ENCODE measurements at regions of chr10 and their contacts with region 1.

Region 1: GRCh38 chr10:102208311-102209035 is 17.6 kb upstream of the ELOVL3 start:
- DNase-seq: no peak
- ATAC-seq: no peak
- H3K4me3 ChIP-seq: no peak overlapping the region
- H3K27ac ChIP-seq: no peak overlapping the region
- H3K4me1 ChIP-seq: no peaks in the 10 kb centered on the region
- H3K27me3 ChIP-seq: no peaks in the 10 kb centered on the region
- CTCF ChIP-seq: no peak
- POLR2A ChIP-seq: no peak

Region 2: DNA sequence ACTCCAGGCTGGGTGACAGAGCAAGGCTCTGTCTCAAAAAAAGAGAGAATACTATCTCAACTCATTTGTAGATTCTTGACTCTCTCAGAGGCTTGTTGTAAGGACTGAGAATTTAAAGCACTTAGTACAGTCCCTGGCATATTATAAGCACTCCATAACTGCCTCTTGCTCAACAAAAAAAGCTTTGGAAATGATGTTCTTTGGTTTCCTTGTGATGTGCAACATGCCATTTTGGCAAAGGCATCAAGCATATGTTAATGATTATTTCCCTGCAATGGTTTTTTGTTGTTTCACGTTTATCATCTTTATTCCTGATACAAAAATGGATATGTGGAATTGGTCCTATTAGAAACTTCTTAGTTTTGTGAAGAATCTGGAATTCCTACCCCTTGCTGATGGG is 40.6 kb before region 1 on chr10:
- in situ Hi-C with region 1: no loop called
- intact Hi-C with region 1: no loop called
- DNase-seq: no peak
- ATAC-seq: no peak
- H3K4me3 ChIP-seq: no peak overlapping the region
- H3K27ac ChIP-seq: no peak overlapping the region
- H3K4me1 ChIP-seq: peaks cover 0 to 7% of the 10 kb centered on the region in 2 donors
- H3K27me3 ChIP-seq: no peaks in the 10 kb centered on the region
- CTCF ChIP-seq: no peak
- POLR2A ChIP-seq: no peak

Region 3: GRCh38 chr10:102435529-102436233 is 227.2 kb after region 1 on chr10:
- in situ Hi-C with region 1: no loop called
- intact Hi-C with region 1: no loop called
- DNase-seq: no peak
- ATAC-seq: no peak
- H3K4me3 ChIP-seq: no peak overlapping the region
- H3K27ac ChIP-seq: no peak overlapping the region
- H3K4me1 ChIP-seq: peaks cover 6 to 12% of the 10 kb centered on the region in 2 donors
- H3K27me3 ChIP-seq: peaks cover 6 to 11% (median 9%) of the 10 kb centered on the region in 3 donors
- CTCF ChIP-seq: no peak
- POLR2A ChIP-seq: no peak

Region 4: GRCh38 chr10:102555781-102556328 is 347.4 kb after region 1 on chr10:
- in situ Hi-C with region 1: loop called in 1 of 4 experiments (anchors 25 kb)
- intact Hi-C with region 1: no loop called
- DNase-seq: peak; percentile 70 to 87
- ATAC-seq: peak; percentile 88 to 94
- H3K4me3 ChIP-seq: peak overlapping the region in 2 of 4 donors; percentile 14 to 26
- H3K27ac ChIP-seq: peak overlapping the region; percentile 69 to 87 (median 78)
- H3K4me1 ChIP-seq: peaks cover 28 to 61% of the 10 kb centered on the region in 2 donors
- H3K27me3 ChIP-seq: no peaks in the 10 kb centered on the region
- CTCF ChIP-seq: no peak
- POLR2A ChIP-seq: no peak

Measured in gastrocnemius medialis (tissue), 4 donors.